ENCODE measurements at regions of chr12 and their contacts with region 1.

Region 1: DNA sequence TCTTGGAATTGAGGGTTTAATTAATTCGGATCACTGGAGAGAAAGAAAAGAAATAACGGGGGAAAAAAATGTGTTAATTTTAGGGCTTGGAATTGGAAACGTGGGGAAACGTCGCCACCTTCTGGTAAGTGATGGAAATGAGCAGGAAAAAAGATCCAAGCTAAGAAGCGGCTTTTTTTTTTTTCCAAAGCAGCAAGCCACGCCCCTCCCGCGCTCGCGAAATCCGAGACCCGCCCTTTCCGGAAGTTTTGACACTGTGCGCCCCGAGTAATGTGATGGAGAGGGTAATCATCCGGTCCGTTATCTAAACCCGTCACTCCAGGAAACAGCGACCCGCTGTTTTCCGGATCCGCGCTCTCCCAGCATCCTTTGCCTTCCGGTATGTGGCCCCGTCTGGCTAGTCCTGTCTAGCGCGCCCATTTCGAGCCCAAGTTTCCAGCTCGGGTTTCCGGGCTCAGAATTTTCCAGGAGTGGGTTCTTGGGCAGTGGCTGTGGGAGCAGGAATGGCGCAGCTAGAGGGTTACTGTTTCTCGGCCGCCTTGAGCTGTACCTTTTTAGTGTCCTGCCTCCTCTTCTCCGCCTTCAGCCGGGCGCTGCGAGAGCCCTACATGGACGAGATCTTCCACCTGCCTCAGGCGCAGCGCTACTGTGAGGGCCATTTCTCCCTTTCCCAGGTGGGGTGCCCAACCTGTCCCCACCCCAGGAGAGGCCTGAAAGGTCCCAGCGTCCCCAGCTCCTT is at the start of gene ALG10B:
- DNase-seq: peak; percentile 93 to 98 (median 96)
- H3K4me3 ChIP-seq: peak within 1 kb of the TSS; percentile 32 to 88 (median 60)
- H3K27ac ChIP-seq: peak within 1 kb of the TSS in 4 of 5 donors; percentile 80 to 95 (median 85)
- H3K4me1 ChIP-seq: peaks cover 0 to 15% of the 10 kb centered on the region in 2 donors
- H3K27me3 ChIP-seq: no peaks in the 10 kb centered on the region
- CTCF ChIP-seq: peak; percentile 23 to 85 (median 73)
- POLR2A ChIP-seq: no peak
- total RNA-seq, gene ALG10B: 4.2 to 14.9 (median 7.9) TPM

Region 2: DNA sequence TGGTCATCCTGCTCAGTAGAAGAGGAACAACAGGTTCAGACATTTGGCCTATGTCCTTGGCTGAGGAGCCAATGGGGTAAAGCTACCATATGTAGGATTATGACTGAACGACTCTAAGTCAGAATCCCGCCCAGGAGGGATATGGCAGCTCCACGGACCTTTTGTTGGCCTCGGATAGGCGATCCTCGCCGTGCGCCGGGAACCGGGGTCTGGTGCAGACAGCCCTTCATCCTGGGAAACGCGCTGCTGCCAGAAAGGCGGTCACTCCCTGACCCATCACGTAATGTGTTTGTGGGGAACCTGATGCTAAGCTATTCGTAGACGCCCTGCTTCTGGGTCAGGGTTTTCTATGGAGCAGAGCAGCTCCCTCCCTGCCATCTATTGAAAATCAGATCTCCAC is 178.8 kb before region 1 on chr12:
- intact Hi-C with region 1: loop called (anchors 2 to 5 kb)
- DNase-seq: peak in 1 of 7 donors; percentile 36
- H3K4me3 ChIP-seq: no peak overlapping the region
- H3K27ac ChIP-seq: no peak overlapping the region
- H3K4me1 ChIP-seq: no peaks in the 10 kb centered on the region
- H3K27me3 ChIP-seq: peaks cover 7% of the 10 kb centered on the region
- CTCF ChIP-seq: no peak
- POLR2A ChIP-seq: no peak

Region 3: GRCh38 chr12:38142974-38143373 is 173.6 kb before region 1 on chr12:
- intact Hi-C with region 1: loop called in 1 of 2 experiments (anchors 5 kb)
- DNase-seq: no peak
- H3K4me3 ChIP-seq: no peak overlapping the region
- H3K27ac ChIP-seq: no peak overlapping the region
- H3K4me1 ChIP-seq: no peaks in the 10 kb centered on the region
- H3K27me3 ChIP-seq: peaks cover 5% of the 10 kb centered on the region
- CTCF ChIP-seq: no peak
- POLR2A ChIP-seq: no peak

Region 4: GRCh38 chr12:38508246-38508645 is 191.7 kb after region 1 on chr12:
- intact Hi-C with region 1: no loop called
- DNase-seq: no peak
- H3K4me3 ChIP-seq: no peak overlapping the region
- H3K27ac ChIP-seq: no peak overlapping the region
- H3K4me1 ChIP-seq: no peaks in the 10 kb centered on the region
- H3K27me3 ChIP-seq: no peaks in the 10 kb centered on the region
- CTCF ChIP-seq: no peak
- POLR2A ChIP-seq: no peak